GM12878 (cell line): ENCODE measurements at regions of chr6 and their contacts with region 1.

Region 1: GRCh38 chr6:150169609-150170008 is 26.8 kb downstream of the PPP1R14C start:
- DNase-seq: no peak
- ATAC-seq: peak; percentile 71
- H3K4me3 ChIP-seq: no peak overlapping the region
- H3K27ac ChIP-seq: no peak overlapping the region
- H3K4me1 ChIP-seq: no peaks in the 10 kb centered on the region; the same call in 1 of the 2 replicates
- H3K27me3 ChIP-seq: no peaks in the 10 kb centered on the region
- CTCF ChIP-seq: no peak
- EP300 ChIP-seq: no peak
- POLR2A ChIP-seq: no peak
- RAD21 ChIP-seq: no peak

Region 2: GRCh38 chr6:150184850-150185731 is 15.5 kb after region 1 on chr6:
- CTCF ChIA-PET with region 1: interaction called, 10 read pairs
- POLR2A ChIA-PET with region 1: interaction called, 3 read pairs
- RAD21 ChIA-PET with region 1: no interaction called
- SMC1A ChIA-PET with region 1: interaction called, 3 read pairs
- in situ Hi-C with region 1: no loop called
- intact Hi-C with region 1: no loop called
- DNase-seq: peak; percentile 13
- ATAC-seq: peak; percentile 75
- H3K4me3 ChIP-seq: no peak overlapping the region
- H3K27ac ChIP-seq: no peak overlapping the region
- H3K4me1 ChIP-seq: 0 out of 2 replicates have a peak, but pooled peaks cover 3% of the 10 kb centered on the region
- H3K27me3 ChIP-seq: no peaks in the 10 kb centered on the region
- CTCF ChIP-seq: no peak
- EP300 ChIP-seq: peak; percentile 14 to 24; a peak in 1 of 4 replicates
- POLR2A ChIP-seq: no peak
- RAD21 ChIP-seq: no peak

Region 3: DNA sequence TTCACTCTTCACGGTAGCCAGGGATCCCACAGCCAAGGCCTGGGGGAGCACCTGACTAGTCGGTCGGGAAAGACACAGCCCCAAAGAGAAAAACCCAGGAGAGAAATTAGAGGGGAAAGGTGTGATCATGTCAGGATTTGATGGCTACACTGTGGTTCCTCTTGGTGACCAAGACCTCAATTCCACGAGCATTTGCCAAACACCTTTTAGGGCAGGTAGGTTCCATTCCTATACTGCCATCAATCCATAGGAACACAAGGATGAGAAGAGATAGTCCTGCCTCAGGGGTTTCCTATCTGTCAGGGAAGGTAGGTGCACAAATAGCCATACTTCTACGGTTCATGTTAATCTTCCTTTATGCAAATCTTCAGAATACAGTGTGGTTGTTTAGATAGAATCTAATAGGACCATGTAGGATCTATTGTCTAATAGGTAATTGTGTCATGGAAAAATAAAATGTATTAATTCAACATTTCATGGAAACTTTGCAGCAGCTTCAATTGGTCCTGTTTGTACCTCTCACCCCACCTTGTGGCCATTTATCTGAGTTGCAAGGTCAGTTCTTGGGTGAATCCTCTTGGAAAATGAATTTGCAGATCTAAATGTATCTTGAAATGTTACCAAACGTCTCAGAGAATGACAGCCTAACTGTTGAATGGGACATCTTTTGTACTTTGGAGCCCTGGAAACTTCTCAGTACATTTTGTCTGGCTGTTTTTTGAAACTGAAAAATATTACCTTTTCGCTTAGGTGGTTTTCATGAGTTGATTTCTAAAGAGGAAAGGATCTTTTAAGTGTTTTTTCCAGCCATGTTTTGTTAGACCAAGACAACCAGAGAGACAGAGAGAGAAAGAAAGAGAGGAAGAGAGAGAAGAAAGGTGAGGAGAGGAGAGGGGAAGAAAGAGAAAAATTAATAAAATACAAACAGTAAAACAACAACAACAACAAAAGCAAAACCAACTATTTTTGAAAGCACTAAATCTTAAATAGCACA is 165.5 kb after region 1 on chr6:
- CTCF ChIA-PET with region 1: no interaction called
- POLR2A ChIA-PET with region 1: no interaction called
- RAD21 ChIA-PET with region 1: no interaction called
- SMC1A ChIA-PET with region 1: no interaction called
- in situ Hi-C with region 1: no loop called
- intact Hi-C with region 1: loop called (anchors 10 kb)
- DNase-seq: no peak
- ATAC-seq: peak; percentile 43; the same call in 2 of the 3 replicates
- H3K4me3 ChIP-seq: no peak overlapping the region
- H3K27ac ChIP-seq: no peak overlapping the region
- H3K4me1 ChIP-seq: no peaks in the 10 kb centered on the region
- H3K27me3 ChIP-seq: no peaks in the 10 kb centered on the region
- CTCF ChIP-seq: peak; percentile 59 to 70 (median 68); a peak in 5 of 6 replicates
- EP300 ChIP-seq: no peak
- POLR2A ChIP-seq: no peak
- RAD21 ChIP-seq: peak; percentile 87